ENCODE measurements at regions of chr17 and their contacts with region 1.

Region 1: DNA sequence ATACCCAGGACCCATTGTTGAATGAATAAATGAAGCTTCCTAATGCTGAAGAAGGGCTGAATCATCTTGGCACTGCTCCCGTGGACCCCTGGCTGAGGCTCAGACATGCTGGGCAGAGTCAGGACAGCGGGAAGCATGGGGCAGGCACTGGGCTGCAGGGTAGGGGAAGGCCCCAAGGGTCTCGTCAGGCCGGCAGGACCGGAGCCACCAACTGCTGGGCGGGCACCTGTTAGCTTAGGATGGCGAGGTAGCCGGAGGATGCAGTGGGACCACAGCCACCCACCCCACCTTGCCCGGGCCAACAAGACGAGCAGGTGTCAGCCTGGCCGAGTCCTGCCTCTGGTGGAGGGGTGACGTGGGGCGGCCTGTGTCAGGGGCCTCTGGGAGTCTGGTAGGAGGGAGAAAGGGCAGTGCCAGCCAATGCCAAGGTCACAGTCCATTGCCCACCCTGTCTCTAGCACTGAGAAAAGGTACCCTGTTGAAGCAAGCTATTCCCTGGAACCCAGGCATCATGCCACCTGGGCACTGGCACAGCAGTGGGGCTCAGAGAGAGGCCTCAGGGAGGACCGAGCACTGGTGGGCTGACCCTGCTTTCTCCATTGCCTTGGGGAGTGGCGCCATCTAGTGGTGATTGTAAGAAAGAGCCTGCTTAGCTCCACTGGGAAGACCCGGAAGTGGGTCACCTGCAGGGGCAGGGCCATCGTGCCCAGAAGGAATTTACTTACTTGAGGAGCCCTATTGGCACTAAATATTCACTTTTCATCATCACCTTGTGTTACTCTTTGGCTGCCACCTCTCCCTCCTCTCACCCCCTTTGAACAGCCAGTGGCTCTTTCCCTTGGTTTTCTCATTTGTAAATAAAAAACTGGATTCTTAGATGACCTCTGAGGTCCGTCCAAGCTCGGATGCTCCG is 3.0 kb upstream of the DLX3 start:
- DNase-seq: peak; percentile 59
- ATAC-seq: peak; percentile 82
- H3K4me3 Mint-ChIP-seq: peak overlapping the region; percentile 19
- H3K27ac Mint-ChIP-seq: no peak overlapping the region
- H3K4me1 Mint-ChIP-seq: peaks cover 31% of the 10 kb centered on the region
- H3K27me3 Mint-ChIP-seq: peaks cover 64% of the 10 kb centered on the region
- CTCF ChIP-seq: peak; percentile 71

Region 2: GRCh38 chr17:49861150-49861892 is 136.7 kb before region 1 on chr17:
- CTCF ChIA-PET with region 1: interaction called, 104 read pairs
- POLR2A ChIA-PET with region 1: no interaction called
- intact Hi-C with region 1: loop called (anchors 1 kb)
- DNase-seq: peak; percentile 40
- ATAC-seq: peak; percentile 78
- H3K4me3 Mint-ChIP-seq: no peak overlapping the region
- H3K27ac Mint-ChIP-seq: no peak overlapping the region
- H3K4me1 Mint-ChIP-seq: no peaks in the 10 kb centered on the region
- H3K27me3 Mint-ChIP-seq: peaks cover 30% of the 10 kb centered on the region
- CTCF ChIP-seq: peak; percentile 17

Region 3: DNA sequence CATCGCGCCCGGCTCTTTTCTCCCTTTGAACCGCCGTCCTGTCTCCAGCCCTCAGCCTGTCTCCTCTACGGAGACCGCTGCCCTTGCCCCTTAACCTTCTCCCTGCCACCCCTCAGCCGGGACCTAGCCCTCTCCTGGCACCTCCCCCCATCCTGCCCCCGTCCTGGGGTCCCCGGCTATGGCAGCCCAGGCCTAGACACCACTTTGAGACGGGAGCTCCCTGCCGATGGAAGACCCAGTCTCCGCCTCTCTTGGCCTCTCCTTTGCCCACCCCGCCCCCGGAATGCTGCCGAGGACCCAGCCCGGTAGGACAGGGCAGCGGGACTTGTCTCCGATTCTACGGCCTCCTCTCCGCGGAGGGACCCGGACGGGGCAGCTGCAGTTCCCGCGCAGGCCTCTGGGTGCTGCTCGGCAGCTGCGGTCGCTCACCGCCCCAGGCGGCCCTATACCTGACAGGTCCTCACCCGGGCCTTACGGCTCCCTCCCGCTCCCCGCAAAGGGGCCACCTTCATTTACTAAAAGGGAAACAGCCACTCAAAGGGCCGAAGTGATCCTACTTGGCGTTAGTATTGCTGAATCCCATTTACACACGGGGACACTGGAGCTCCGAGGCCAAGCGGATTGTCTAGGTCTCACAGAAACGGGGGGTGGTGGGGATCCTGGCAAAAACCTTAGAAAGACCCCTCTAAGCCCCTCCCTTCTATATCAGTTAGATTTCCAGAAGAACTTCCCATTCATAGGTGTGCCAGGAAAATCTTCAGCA is 117.6 kb before region 1 on chr17:
- CTCF ChIA-PET with region 1: interaction called, 25 read pairs
- POLR2A ChIA-PET with region 1: no interaction called
- intact Hi-C with region 1: loop called (anchors 1 kb)
- DNase-seq: peak; percentile 65
- ATAC-seq: peak; percentile 98
- H3K4me3 Mint-ChIP-seq: peak overlapping the region; percentile 28
- H3K27ac Mint-ChIP-seq: no peak overlapping the region
- H3K4me1 Mint-ChIP-seq: peaks cover 6% of the 10 kb centered on the region
- H3K27me3 Mint-ChIP-seq: peaks cover 48% of the 10 kb centered on the region
- CTCF ChIP-seq: peak; percentile 69

Region 4: GRCh38 chr17:49952209-49952911 is 45.7 kb before region 1 on chr17:
- CTCF ChIA-PET with region 1: interaction called, 40 read pairs
- POLR2A ChIA-PET with region 1: interaction called, 11 read pairs
- intact Hi-C with region 1: loop called (anchors 1 kb)
- DNase-seq: peak; percentile 44
- ATAC-seq: peak; percentile 68
- H3K4me3 Mint-ChIP-seq: no peak overlapping the region
- H3K27ac Mint-ChIP-seq: no peak overlapping the region
- H3K4me1 Mint-ChIP-seq: no peaks in the 10 kb centered on the region
- H3K27me3 Mint-ChIP-seq: peaks cover 54% of the 10 kb centered on the region
- CTCF ChIP-seq: no peak

Region 5: GRCh38 chr17:49968380-49969133 is 29.5 kb before region 1 on chr17:
- CTCF ChIA-PET with region 1: interaction called, 7 read pairs
- POLR2A ChIA-PET with region 1: no interaction called
- intact Hi-C with region 1: loop called (anchors 2 kb)
- DNase-seq: peak; percentile 54
- ATAC-seq: peak; percentile 77
- H3K4me3 Mint-ChIP-seq: peak overlapping the region; percentile 87
- H3K27ac Mint-ChIP-seq: peak overlapping the region; percentile 14
- H3K4me1 Mint-ChIP-seq: peaks cover 48% of the 10 kb centered on the region
- H3K27me3 Mint-ChIP-seq: peaks cover 78% of the 10 kb centered on the region
- CTCF ChIP-seq: no peak

Region 6: DNA sequence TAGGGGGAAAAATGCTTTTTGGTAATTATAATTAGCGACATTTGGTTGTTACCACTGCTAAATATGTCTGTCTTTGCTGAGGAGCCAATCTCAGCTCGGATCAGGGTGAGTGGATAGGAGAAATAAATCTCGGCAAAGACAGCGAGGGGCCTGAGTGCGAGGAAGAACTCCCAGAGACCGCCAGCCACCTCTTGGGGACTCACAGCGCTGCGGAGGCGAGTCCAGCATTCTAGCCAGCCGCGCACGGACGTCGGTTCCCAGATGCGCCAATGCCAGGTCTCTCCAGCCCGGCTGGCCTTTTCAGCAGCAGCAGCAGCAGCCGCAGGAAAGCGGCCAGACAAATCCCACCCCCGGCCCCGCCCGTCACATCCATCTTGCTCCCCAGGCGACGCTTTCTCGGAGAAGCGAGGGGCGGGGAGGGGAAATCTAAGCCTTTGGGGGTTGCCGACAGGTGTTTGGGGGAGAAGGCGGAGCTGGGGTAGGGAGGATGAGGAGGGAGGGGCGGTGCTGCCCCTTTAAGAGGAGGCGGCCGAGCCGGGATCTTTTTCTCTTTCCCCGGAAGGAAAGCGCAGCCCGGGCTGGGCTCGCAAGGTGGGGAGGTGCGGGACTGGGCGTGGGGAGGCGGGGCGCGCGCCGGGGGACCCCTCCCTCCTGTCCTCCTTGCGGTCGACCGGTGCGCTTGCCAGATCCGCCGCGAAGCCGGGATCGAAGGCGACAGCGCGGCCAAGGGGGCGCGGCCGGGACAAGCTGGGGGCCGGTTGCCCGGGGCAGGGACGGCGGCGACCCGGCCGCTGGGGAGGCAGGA is 57.6 kb after region 1 on chr17 and contains the start of gene ITGA3:
- CTCF ChIA-PET with region 1: interaction called, 11 read pairs
- POLR2A ChIA-PET with region 1: no interaction called
- intact Hi-C with region 1: no loop called
- DNase-seq: peak; percentile 38
- ATAC-seq: peak; percentile 64
- H3K4me3 Mint-ChIP-seq: peak within 1 kb of the TSS; percentile 91
- H3K27ac Mint-ChIP-seq: peak within 1 kb of the TSS; percentile 59
- H3K4me1 Mint-ChIP-seq: peaks cover 29% of the 10 kb centered on the region
- H3K27me3 Mint-ChIP-seq: peaks cover 21% of the 10 kb centered on the region
- CTCF ChIP-seq: no peak
- total RNA-seq, gene ITGA3: 7.7 and 9.8 TPM in 2 replicates